AG04450 (cell line): ENCODE measurements at regions of chr10 and their contacts with region 1.

Region 1: DNA sequence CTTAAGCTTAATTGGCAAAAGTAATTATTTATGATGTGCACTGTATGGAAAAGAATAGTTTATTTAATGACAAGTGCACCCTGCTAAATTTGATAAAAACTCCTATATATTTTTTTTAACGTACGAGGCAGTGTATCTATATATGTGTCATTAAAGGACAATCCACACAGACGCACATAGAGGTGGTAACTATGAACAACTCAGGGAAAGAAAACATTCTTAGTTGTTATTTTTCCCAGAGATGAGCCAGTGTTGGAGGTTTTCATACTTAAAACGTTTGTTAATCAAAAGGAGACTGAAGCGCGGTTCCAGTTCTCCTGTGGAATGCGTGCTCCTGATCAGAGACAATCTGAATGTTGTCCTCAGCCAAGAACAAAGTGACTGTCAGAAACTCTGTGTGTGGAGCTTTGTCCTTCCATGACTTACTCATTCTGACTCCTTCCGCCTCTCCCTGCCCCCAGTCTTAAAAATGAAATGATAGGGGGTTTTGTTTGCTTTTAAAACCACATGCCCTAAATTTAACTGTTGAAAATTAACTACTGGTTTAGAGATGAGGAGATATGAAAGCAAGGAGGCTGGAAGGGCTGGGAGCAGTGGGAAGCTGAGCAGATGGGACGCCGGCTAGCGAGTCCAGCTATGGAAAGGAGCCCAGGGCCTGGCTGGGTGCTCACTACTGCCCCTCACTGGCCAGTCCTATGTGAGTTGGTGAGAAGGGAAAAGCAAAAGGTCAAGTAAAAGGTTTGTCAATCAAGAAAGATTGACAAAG is 99.6 kb downstream of the SVIL start:
- DNase-seq: peak; percentile 64
- H3K4me3 ChIP-seq: peak overlapping the region; percentile 37
- H3K27ac ChIP-seq: peak overlapping the region; percentile 47
- H3K27me3 ChIP-seq: no peaks in the 10 kb centered on the region
- CTCF ChIP-seq: peak; percentile 90

Region 2: GRCh38 chr10:29131952-29132820 is 403.0 kb before region 1 on chr10:
- CTCF ChIA-PET with region 1: no interaction called
- POLR2A ChIA-PET with region 1: no interaction called
- DNase-seq: no peak
- H3K4me3 ChIP-seq: no peak overlapping the region
- H3K27ac ChIP-seq: no peak overlapping the region
- H3K27me3 ChIP-seq: no peaks in the 10 kb centered on the region
- CTCF ChIP-seq: no peak

Region 3: DNA sequence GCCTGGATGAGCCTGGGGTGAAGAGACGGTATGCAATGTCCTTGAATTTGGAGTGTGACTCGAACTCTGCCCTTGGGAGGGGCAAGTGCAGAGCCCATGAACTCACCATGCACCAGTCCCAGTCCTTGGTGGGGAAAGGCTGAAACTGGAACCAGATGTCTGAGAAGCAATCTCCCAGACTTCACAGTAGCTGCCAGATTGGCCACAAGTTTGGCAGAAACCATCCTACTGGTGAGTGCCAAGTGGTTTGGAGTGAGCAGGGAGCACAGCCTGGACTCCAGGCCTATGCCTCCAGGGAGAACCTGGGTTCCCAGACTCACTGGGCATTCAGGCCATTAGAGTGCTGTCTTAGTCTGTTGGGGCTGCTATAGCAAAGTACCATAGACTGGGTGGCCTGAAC is 345.9 kb before region 1 on chr10:
- CTCF ChIA-PET with region 1: no interaction called
- POLR2A ChIA-PET with region 1: no interaction called
- DNase-seq: no peak
- H3K4me3 ChIP-seq: no peak overlapping the region
- H3K27ac ChIP-seq: no peak overlapping the region
- H3K27me3 ChIP-seq: peaks cover 14% of the 10 kb centered on the region
- CTCF ChIP-seq: no peak

Region 4: DNA sequence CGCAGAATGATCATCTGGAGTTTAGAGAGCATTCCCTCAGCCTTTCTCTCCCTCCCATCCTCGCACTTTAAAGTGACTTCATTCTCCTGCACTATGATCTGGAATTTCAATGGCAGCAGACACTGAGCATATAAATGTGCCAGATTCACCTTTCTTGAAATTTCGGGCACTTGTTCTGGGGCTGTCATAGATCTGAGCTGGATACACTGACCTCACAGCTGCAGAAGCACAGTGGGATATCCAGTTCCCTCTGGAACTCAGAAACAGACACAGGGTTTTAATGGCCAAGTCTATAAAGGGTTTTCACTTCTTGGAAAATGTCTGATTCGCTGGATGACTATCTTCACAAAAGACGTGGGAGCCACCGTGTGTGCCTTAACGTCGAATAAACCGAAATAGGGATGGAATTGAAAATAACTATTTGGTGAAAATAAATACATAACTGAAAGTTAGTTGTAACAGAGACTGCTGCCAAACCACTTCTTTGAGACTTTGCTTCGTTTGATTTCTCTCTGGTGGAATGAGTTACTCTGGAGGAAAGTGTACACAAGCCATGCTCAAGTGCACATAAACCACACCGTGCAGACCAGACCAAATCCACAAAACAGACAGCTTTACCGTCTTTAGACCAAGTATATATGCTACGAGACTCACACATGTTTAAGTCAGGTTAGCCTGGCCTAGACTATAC is 26.5 kb before region 1 on chr10:
- CTCF ChIA-PET with region 1: interaction called, 14 read pairs
- POLR2A ChIA-PET with region 1: no interaction called
- DNase-seq: no peak
- H3K4me3 ChIP-seq: no peak overlapping the region
- H3K27ac ChIP-seq: no peak overlapping the region
- H3K27me3 ChIP-seq: no peaks in the 10 kb centered on the region
- CTCF ChIP-seq: no peak

Region 5: GRCh38 chr10:29522061-29522855 is 12.9 kb before region 1 on chr10:
- CTCF ChIA-PET with region 1: interaction called, 41 read pairs
- POLR2A ChIA-PET with region 1: no interaction called
- DNase-seq: no peak
- H3K4me3 ChIP-seq: no peak overlapping the region
- H3K27ac ChIP-seq: peak overlapping the region; percentile 47
- H3K27me3 ChIP-seq: no peaks in the 10 kb centered on the region
- CTCF ChIP-seq: no peak

Region 6: GRCh38 chr10:29555746-29556481 is 20.7 kb after region 1 on chr10:
- CTCF ChIA-PET with region 1: interaction called, 24 read pairs
- POLR2A ChIA-PET with region 1: no interaction called
- DNase-seq: no peak
- H3K4me3 ChIP-seq: no peak overlapping the region
- H3K27ac ChIP-seq: peak overlapping the region; percentile 68
- H3K27me3 ChIP-seq: no peaks in the 10 kb centered on the region
- CTCF ChIP-seq: no peak